Activated T-helper 2 cell treated with anti-CD3 and anti-CD28 coated beads, Interferon-gamma antibody, Interleukin-2, Interleukin-4, amounts not matched to agents 10 μg/mL and 5 μg/mL and 100 μg/mL, durations not matched to agents 14 hours and 24 hours and 36 hours (primary cell): ENCODE measurements at regions of chr20 and their contacts with region 1.

Region 1: DNA sequence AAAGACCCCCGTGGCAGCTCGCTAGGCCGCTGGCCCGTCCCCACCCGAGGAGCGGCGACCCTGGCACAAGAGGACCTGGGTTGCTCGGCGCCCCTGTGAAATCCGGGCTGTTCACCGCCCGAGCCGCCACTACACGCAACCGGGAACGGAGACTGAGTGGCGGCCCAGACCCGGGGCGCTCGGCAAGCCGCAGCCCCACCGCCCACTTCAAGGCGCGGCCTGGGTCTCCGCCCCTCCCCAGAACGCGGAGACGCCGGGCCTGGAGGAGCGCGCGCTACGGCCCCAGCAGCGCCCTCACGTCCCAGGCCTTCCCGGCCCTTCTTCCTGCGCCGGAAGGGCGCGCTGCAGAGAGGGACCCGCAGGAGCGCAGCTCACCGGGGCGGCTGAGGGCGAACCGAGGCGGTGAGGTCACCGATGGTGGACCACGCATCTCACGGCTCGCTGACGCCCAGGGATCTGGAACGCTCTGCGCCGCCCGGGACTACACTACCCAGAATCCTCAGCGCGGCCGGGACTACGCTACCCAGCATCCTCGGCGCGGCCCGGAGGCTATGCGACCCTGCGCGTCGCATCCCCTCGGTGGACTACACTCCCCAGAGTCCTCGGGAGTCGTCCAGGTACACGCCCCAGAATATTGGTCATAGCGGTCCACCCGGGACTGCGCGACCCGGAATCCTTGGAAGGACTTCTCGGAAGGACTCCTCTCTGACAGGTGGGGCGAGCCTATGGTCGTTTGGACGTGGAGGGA is at the start of gene ZNF337:
- DNase-seq: peak; percentile 91
- H3K4me3 Mint-ChIP-seq: peak within 1 kb of the TSS; percentile 92
- H3K27ac Mint-ChIP-seq: peak within 1 kb of the TSS; percentile 87
- H3K4me1 Mint-ChIP-seq: peaks cover 18% of the 10 kb centered on the region
- H3K27me3 Mint-ChIP-seq: peaks cover 6% of the 10 kb centered on the region
- total RNA-seq, gene ZNF337: 12.7 and 13.3 TPM in 2 replicates

Region 2: DNA sequence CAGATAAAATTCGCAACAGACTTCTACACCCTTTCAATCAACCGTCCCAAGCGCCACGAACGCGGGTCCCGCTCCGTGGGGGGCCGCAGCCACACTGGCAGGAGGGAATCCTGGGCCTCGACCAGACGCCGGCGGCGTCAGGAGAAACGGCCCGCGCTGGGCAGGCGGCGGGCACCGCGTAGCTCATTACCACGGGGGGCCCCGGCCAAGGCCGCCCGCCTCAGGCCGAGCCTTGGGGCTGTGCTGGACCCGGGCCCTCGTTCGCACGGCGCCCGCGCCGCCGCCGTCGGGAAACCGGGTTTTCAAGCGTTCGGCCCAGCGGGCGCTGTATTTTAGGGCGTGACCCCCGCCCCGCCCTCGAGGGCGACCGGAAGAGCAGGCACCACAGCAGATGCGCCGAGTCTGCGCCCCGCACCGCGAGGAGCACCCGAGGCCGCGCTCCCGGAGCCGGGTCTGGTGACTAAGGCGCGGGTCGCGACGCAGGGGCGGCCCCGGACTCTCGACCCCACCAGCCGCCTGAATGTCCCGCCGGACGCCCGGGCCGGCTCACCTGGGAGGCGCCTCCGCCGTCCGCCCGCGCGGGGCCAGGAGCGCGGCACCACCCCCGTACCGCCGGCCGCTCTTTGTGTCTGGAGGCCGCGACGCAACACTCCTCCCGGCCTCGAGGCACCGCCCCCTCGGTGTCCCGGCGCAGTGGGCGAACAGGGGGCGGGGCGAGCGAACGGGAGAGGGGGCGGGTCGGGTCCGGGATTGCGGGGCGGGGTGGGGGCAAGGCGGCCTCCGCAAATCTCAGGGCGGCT is 111.5 kb before region 1 on chr20 and contains the start of gene NINL:
- intact Hi-C with region 1: loop called (anchors 5 kb)
- DNase-seq: peak; percentile 52
- H3K4me3 Mint-ChIP-seq: peak within 1 kb of the TSS; percentile 80
- H3K27ac Mint-ChIP-seq: peak within 1 kb of the TSS; percentile 58
- H3K4me1 Mint-ChIP-seq: peaks cover 12% of the 10 kb centered on the region
- H3K27me3 Mint-ChIP-seq: no peaks in the 10 kb centered on the region
- total RNA-seq, gene NINL: 6.9 and 7.5 TPM in 2 replicates

Region 3: GRCh38 chr20:25623736-25624499 is 72.6 kb before region 1 on chr20 and contains the start of gene NANP:
- intact Hi-C with region 1: loop called (anchors 1 kb)
- DNase-seq: peak; percentile 89
- H3K4me3 Mint-ChIP-seq: peak within 1 kb of the TSS; percentile 89
- H3K27ac Mint-ChIP-seq: peak within 1 kb of the TSS; percentile 95
- H3K4me1 Mint-ChIP-seq: peaks cover 26% of the 10 kb centered on the region
- H3K27me3 Mint-ChIP-seq: no peaks in the 10 kb centered on the region
- total RNA-seq, gene NANP: 7.9 and 9.1 TPM in 2 replicates

Region 4: GRCh38 chr20:25685276-25686080 is 11.1 kb before region 1 on chr20:
- intact Hi-C with region 1: no loop called
- DNase-seq: no peak
- H3K4me3 Mint-ChIP-seq: no peak overlapping the region
- H3K27ac Mint-ChIP-seq: no peak overlapping the region
- H3K4me1 Mint-ChIP-seq: peaks cover 8% of the 10 kb centered on the region
- H3K27me3 Mint-ChIP-seq: no peaks in the 10 kb centered on the region

Region 5: DNA sequence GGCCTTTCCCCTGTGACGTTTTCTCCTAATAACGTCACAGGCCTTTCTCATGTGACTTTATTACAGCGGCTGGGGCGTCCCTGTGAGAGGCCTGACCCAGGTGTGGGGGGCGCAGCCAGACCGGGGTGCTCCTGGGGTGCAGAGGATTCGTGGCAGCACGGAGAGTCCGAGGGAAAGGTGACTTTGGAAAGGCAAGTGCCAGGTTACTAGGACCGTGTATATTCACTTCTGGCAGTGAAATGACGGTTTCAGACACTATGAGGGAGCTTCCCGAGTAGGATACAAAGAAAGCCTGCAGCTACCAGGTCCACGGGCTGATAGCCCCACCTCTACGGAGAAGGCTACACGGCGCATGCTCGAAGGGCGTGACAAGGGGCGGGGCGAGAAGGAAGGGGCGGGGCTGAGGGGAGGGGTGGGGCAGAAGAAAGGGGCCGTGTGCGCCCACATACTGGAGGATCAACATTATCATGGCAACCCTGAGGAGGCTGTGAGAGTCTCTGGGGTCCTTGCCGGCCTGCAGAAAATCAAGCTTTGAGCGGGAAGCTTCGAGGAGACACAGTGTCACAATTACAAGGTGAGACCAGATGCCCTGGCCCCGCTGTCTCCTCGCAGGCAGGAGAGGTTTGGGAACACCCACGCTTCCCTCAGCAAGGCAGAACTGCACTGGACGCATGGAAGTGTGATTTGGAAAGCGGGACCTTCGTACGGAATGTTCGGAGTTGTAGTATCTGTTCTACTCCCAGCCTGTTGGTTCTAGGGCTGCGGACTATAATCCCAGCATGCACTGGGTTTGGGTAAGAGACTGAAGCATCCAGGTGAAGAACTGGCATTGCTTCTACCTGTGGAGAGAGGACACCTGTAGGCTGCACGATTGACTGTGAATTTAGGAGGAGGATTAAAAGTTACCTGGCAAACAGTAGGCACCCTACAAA is 54.5 kb after region 1 on chr20:
- intact Hi-C with region 1: loop called (anchors 2 kb)
- DNase-seq: peak; percentile 39
- H3K4me3 Mint-ChIP-seq: peak overlapping the region; percentile 81
- H3K27ac Mint-ChIP-seq: peak overlapping the region; percentile 40
- H3K4me1 Mint-ChIP-seq: peaks cover 19% of the 10 kb centered on the region
- H3K27me3 Mint-ChIP-seq: peaks cover 2% of the 10 kb centered on the region